Aorta (tissue), 5 donors: ENCODE measurements at regions of chr19 and their contacts with region 1.

Region 1: GRCh38 chr19:15251749-15252397 is 19.6 kb upstream of the EPHX3 start:
- DNase-seq: peak; percentile 92 to 93
- ATAC-seq: peak; percentile 84
- H3K4me3 ChIP-seq: no peak overlapping the region
- H3K27ac ChIP-seq: peak overlapping the region; percentile 89 to 97
- H3K4me1 ChIP-seq: no peaks in the 10 kb centered on the region
- H3K27me3 ChIP-seq: no peaks in the 10 kb centered on the region

Region 2: DNA sequence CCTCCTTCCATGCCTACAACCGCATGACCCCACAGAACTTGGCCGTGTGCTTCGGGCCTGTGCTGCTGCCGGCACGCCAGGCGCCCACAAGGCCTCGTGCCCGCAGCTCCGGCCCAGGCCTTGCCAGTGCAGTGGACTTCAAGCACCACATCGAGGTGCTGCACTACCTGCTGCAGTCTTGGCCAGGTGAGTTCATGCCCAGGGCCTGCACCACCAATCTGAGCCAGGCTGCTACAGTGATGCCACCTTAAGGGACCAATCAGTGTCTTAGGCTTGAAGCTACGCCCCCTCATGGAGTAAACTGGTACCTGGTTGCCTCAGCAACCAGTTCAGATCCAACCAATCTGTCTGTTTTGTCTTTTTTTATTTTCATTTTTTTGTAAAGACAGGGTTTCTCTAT is 139.5 kb before region 1 on chr19:
- intact Hi-C with region 1: loop called in 1 of 2 experiments (anchors 5 kb)
- DNase-seq: peak; percentile 30 to 46
- ATAC-seq: no peak
- H3K4me3 ChIP-seq: no peak overlapping the region
- H3K27ac ChIP-seq: no peak overlapping the region
- H3K4me1 ChIP-seq: no peaks in the 10 kb centered on the region
- H3K27me3 ChIP-seq: no peaks in the 10 kb centered on the region

Region 3: DNA sequence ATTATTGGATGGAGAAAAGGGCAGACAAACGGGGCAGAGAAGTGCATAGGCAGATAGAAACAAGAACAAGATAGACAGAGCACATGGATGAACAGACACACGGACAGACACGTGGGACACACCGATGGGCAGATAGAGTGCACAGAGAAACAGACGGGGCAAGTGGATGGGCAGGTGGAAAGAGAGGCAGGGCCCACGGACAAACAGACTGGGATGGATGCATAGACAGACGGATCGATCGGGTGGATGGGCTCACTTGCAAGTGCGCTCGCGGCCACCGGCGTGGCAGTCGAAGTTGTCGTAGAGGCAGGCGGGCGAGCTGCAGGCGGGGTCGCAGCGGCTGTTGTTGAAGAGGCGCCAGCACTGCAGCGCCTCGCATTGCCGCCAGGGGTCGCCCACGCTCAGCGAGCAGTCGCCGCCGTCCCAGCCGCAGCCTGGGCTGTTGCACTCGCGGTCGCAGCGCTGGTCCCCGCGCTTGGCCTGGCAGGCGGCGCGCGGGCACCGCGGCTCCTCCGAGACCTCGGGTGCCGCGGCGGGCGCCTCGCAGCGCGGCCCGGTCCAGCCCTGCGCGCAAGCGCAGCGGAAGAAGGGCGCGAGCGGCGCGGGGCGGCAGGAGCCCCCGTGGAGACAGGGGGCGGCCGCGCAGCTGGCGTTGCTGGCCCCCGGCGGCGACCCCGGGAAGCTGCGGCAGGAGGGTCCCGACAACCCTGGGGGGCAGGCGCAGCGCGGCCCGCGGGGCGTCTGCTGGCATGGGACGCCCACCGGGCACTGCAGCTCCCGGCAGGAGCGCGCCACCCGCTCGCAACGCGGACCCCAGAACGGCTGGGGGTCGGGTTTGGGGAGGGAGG is 74.4 kb before region 1 on chr19:
- intact Hi-C with region 1: loop called (anchors 2 kb)
- DNase-seq: peak; percentile 89 to 95
- ATAC-seq: peak; percentile 94
- H3K4me3 ChIP-seq: no peak overlapping the region
- H3K27ac ChIP-seq: peak overlapping the region in 1 of 2 donors; percentile 11
- H3K4me1 ChIP-seq: no peaks in the 10 kb centered on the region
- H3K27me3 ChIP-seq: no peaks in the 10 kb centered on the region

Region 4: DNA sequence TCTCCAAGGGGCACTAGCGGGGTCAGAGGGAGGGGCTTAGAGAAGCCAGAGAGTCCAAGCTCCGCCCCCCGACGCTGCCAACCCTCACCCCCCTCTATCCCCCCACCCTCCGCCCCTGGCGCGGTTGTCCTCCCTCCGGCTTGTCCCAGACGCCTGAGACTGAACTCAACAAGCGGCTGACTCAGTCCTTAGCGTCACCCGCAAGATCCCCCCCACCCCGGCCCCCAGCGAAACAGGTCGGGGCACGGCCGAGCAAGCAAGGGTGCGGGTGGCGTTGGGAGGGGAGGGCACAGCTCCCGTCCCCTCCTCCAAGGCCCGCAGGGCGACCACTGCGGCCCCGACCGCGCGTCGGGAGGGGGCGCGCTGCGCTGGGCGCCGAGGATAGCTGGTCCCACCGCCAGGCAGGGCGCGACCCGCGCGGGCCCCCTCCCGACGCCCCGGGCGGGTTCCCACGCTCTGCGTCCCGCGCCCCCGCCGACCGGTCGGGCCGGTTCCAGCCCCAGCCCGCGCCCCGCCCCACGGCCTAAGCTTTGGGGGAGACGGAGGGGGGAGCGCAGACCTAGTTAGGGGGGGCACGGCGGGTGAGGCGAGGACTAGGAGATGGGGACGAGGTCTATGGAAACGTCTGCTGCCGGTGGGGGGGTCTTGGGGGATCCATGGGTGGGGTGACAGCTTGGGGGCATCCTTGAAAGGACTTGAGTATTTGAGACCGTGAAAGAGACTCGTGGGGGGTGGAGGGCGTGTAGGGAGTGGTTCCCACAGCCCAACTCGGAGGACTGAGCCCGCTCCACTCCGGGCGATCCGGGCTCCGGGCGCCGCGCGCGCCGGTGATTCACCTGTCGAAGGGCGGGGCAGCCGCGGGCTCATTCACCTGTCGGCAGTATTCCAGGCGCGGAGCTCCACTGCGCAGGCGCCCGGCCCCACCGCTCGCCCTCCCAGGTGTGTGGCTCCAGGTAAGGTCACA is 56.2 kb before region 1 on chr19:
- intact Hi-C with region 1: loop called (anchors 1 to 5 kb)
- DNase-seq: peak; percentile 88 to 95
- ATAC-seq: peak; percentile 77
- H3K4me3 ChIP-seq: peak overlapping the region; percentile 58 to 65
- H3K27ac ChIP-seq: peak overlapping the region; percentile 16 to 64
- H3K4me1 ChIP-seq: peaks cover 0 to 5% of the 10 kb centered on the region in 2 donors
- H3K27me3 ChIP-seq: no peaks in the 10 kb centered on the region

Region 5: GRCh38 chr19:15210323-15210781 is 41.5 kb before region 1 on chr19:
- intact Hi-C with region 1: loop called (anchors 5 kb)
- DNase-seq: peak; percentile 90 to 91
- ATAC-seq: peak; percentile 86
- H3K4me3 ChIP-seq: no peak overlapping the region
- H3K27ac ChIP-seq: peak overlapping the region in 1 of 2 donors; percentile 3
- H3K4me1 ChIP-seq: peaks cover 0 to 4% of the 10 kb centered on the region in 2 donors
- H3K27me3 ChIP-seq: no peaks in the 10 kb centered on the region

Region 6: GRCh38 chr19:15222738-15223648 is 28.9 kb before region 1 on chr19:
- intact Hi-C with region 1: loop called in 1 of 2 experiments (anchors 1 kb)
- DNase-seq: peak; percentile 96 to 97
- ATAC-seq: peak; percentile 95
- H3K4me3 ChIP-seq: peak overlapping the region in 1 of 2 donors; percentile 37
- H3K27ac ChIP-seq: no peak overlapping the region
- H3K4me1 ChIP-seq: no peaks in the 10 kb centered on the region
- H3K27me3 ChIP-seq: no peaks in the 10 kb centered on the region